ENCODE measurements at regions of chr17 and their contacts with region 1.

Region 1: GRCh38 chr17:44218344-44219107 is 949 bp downstream of the UBTF start:
- DNase-seq: peak; percentile 95
- H3K4me3 ChIP-seq: peak overlapping the region; percentile 93 to 98 (median 96)
- H3K27ac ChIP-seq: peak overlapping the region; percentile 99 to 100 (median 100)
- H3K4me1 ChIP-seq: peaks cover 3 to 47% (median 32%) of the 10 kb centered on the region in 4 donors
- H3K27me3 ChIP-seq: no peaks in the 10 kb centered on the region
- CTCF ChIP-seq: peak; percentile 29 to 61 (median 51)
- EP300 ChIP-seq: no peak
- POLR2A ChIP-seq: no peak

Region 2: GRCh38 chr17:44141717-44142285 is 76.7 kb before region 1 on chr17 and contains the start of gene HROB:
- intact Hi-C with region 1: loop called (anchors 5 kb)
- DNase-seq: peak; percentile 97
- H3K4me3 ChIP-seq: peak within 1 kb of the TSS; percentile 46 to 67 (median 60)
- H3K27ac ChIP-seq: peak within 1 kb of the TSS; percentile 45 to 73 (median 58)
- H3K4me1 ChIP-seq: peaks cover 0 to 27% (median 22%) of the 10 kb centered on the region in 4 donors
- H3K27me3 ChIP-seq: no peaks in the 10 kb centered on the region
- CTCF ChIP-seq: peak; percentile 77 to 86 (median 84)
- EP300 ChIP-seq: no peak
- POLR2A ChIP-seq: no peak
- total RNA-seq, gene HROB: 0.36 to 3.3 (median 0.52) TPM

Region 3: GRCh38 chr17:44186307-44187130 is 32.0 kb before region 1 on chr17 and contains the start of gene TMUB2:
- intact Hi-C with region 1: loop called (anchors 1 kb)
- DNase-seq: peak; percentile 99
- H3K4me3 ChIP-seq: peak within 1 kb of the TSS; percentile 60 to 94 (median 74)
- H3K27ac ChIP-seq: peak within 1 kb of the TSS; percentile 89 to 99 (median 94)
- H3K4me1 ChIP-seq: peaks cover 0 to 35% (median 27%) of the 10 kb centered on the region in 4 donors
- H3K27me3 ChIP-seq: no peaks in the 10 kb centered on the region
- CTCF ChIP-seq: no peak
- EP300 ChIP-seq: peak in 2 of 4 donors; percentile 24 to 65
- POLR2A ChIP-seq: peak; percentile 60 to 81
- total RNA-seq, gene TMUB2: 26.9 to 40.3 (median 29.2) TPM

Region 4: DNA sequence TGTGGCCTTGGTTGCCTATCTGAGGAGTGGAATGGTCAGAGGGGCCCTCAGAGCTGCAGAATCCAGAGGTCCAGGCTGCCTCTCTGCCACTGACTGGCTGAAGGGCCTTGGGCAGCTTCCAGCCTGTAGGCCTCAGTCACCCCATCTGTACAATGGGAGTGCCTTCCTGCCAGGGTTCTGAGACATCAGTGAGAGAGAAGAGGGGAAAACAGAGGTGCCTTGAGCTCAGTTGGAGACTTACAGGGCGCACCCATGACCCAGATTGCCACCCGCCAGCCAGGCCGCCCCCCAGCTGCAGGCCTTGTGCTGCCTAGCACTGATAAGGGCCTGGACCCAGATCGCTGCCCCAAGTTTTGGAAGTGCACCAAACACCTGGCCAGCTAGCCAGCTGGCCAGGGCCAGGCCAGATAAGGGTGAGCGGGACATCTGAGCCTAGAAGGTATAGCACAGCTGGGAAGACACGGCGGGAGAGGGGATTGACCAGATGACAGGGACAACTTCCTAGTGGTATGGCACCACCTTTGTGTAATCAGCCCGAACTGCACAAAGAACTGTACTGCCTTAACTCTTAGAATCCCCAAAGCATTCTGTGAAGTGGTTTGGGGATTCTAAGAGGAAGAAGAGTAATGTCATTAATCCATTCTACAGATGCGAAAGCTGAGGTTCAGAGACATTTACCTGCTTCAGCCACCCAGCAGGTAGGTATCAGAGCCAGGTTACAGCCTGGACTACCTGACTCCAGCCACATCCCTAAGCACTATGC is 48.1 kb after region 1 on chr17:
- intact Hi-C with region 1: no loop called
- DNase-seq: no peak
- H3K4me3 ChIP-seq: no peak overlapping the region
- H3K27ac ChIP-seq: no peak overlapping the region
- H3K4me1 ChIP-seq: no peaks in the 10 kb centered on the region
- H3K27me3 ChIP-seq: no peaks in the 10 kb centered on the region
- CTCF ChIP-seq: no peak
- EP300 ChIP-seq: no peak
- POLR2A ChIP-seq: no peak

Region 5: GRCh38 chr17:44308320-44308818 is 89.8 kb after region 1 on chr17 and contains the start of gene RUNDC3A:
- intact Hi-C with region 1: loop called (anchors 2 kb)
- DNase-seq: peak; percentile 91
- H3K4me3 ChIP-seq: peak within 1 kb of the TSS; percentile 17 to 55 (median 44)
- H3K27ac ChIP-seq: peak within 1 kb of the TSS; percentile 68 to 87 (median 78)
- H3K4me1 ChIP-seq: peaks cover 0 to 21% (median 19%) of the 10 kb centered on the region in 4 donors
- H3K27me3 ChIP-seq: peaks cover 0 to 10% (median 7%) of the 10 kb centered on the region in 3 donors
- CTCF ChIP-seq: no peak
- EP300 ChIP-seq: no peak
- POLR2A ChIP-seq: no peak
- total RNA-seq, gene RUNDC3A: 1.2 to 10.5 (median 6.0) TPM

Region 6: GRCh38 chr17:44324571-44325275 is 106.2 kb after region 1 on chr17 and contains the start of gene SLC25A39:
- intact Hi-C with region 1: loop called (anchors 1 kb)
- DNase-seq: peak; percentile 98
- H3K4me3 ChIP-seq: peak within 1 kb of the TSS; percentile 67 to 97 (median 88)
- H3K27ac ChIP-seq: peak within 1 kb of the TSS; percentile 94 to 99 (median 97)
- H3K4me1 ChIP-seq: peaks cover 0 to 35% (median 26%) of the 10 kb centered on the region in 4 donors
- H3K27me3 ChIP-seq: no peaks in the 10 kb centered on the region
- CTCF ChIP-seq: no peak
- EP300 ChIP-seq: no peak
- POLR2A ChIP-seq: peak; percentile 34 to 50
- total RNA-seq, gene SLC25A39: 39.0 to 51.8 (median 43.3) TPM

Region 7: DNA sequence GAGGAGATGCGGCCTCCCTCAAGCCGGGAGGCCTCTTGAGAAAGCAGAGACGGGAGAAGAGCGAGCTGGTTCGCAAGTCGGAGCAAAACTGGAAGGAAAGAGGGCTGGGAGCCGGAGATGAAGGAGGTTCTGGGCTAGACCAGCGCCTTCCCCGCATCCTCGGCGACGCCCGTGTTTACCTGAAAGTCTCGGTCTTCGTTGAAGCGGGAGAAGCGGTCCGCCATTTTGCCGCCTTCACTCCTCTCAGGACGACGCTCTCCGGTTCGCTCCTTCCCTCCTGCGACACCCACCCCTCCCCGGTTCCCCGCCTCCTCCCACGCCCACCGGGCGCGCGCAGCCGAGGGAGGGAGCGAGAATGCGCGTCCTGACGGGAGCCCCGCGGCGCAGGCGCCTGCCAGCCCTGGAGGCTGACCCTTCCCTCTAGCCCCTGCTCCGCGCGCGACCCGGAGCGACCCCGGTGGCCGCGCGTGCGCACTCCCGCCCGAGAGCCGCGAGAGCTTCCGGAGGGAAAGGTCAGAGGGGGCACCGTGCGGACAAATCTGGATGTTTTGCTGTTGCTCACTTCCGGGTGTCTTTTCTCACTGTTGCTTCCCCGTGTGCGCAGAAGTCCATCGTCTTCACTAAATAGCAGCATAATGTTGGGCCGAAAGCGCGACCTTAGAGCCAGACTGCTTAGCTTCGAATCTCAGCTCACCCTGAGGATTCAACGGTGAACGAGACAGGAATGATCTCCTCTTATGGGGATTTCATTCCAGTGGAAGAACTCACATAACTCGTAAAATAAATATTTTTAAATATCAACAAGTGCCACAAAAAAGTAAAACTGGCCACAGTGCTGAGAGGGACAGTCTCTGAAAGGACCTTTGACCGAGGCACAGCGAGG is 284.9 kb after region 1 on chr17 and contains the start of gene GPATCH8:
- intact Hi-C with region 1: loop called (anchors 10 kb)
- DNase-seq: peak; percentile 97
- H3K4me3 ChIP-seq: peak within 1 kb of the TSS; percentile 62 to 77 (median 69)
- H3K27ac ChIP-seq: peak within 1 kb of the TSS; percentile 85 to 93 (median 88)
- H3K4me1 ChIP-seq: peaks cover 0 to 44% (median 38%) of the 10 kb centered on the region in 4 donors
- H3K27me3 ChIP-seq: no peaks in the 10 kb centered on the region
- CTCF ChIP-seq: no peak
- EP300 ChIP-seq: peak in 1 of 4 donors; percentile 15
- POLR2A ChIP-seq: peak; percentile 62 to 72
- total RNA-seq, gene GPATCH8: 27.5 to 43.2 (median 34.3) TPM

Measured in sigmoid colon (tissue), 7 donors.